Natural killer cell (primary cell): ENCODE measurements at regions of chr3 and their contacts with region 1.

Region 1: DNA sequence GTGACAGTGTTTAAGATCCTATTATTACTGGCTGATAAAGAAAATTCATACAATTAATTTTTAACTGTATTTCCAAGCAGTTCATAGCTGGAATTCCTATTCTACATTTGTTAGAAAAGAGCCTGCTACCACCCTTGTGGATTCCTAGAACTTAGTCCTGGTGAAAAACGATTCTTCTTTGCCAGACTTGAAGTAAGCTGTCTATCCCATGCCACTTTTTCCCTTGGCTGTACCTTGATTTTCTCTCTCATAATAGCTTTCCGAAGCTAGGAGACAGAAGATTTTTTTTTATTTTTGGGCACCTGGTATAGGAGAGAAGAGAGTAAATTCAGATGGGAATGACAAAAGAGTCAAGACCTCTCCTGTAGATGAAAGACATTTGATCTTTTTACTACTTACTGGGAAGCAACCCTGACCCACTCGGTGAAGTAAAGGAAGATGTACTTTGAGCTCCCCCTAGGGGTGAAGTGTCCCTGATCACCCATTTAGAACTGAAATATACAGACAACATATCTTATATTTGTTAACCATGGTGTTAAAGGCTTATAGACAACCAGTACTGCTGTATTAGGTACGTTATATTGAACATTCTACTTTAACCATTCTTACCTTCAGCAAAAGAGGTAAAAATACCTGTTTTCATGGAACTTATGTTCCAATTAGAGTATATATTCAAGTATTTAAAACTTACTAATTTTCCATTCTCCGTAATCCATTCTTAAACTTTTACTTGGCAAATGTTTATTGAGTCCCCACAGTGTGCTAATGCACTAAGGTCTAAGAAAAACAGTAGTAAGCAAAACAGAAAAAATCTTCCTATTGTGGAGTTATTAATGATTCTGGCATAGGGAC is 36.2 kb upstream of the C3orf38 start:
- DNase-seq: peak in 1 of 2 donors; percentile 85
- ATAC-seq: peak; percentile 87 to 95 (median 95)
- H3K4me3 ChIP-seq: no peak overlapping the region
- H3K4me3 Mint-ChIP-seq: no peak overlapping the region
- H3K27ac ChIP-seq: no peak overlapping the region
- H3K27ac Mint-ChIP-seq: peak overlapping the region in 1 of 2 donors; percentile 37
- H3K4me1 ChIP-seq: no peaks in the 10 kb centered on the region
- H3K4me1 Mint-ChIP-seq: peaks cover 7 to 16% of the 10 kb centered on the region in 2 donors
- H3K27me3 ChIP-seq: no peaks in the 10 kb centered on the region
- H3K27me3 Mint-ChIP-seq: no peaks in the 10 kb centered on the region
- CTCF ChIP-seq: peak; percentile 72

Region 2: GRCh38 chr3:87260270-87260669 is 853.3 kb before region 1 on chr3:
- intact Hi-C with region 1: loop called (anchors 5 kb)
- DNase-seq: peak in 1 of 2 donors; percentile 65
- ATAC-seq: peak in 2 of 3 donors; percentile 63 to 66
- H3K4me3 ChIP-seq: no peak overlapping the region
- H3K4me3 Mint-ChIP-seq: no peak overlapping the region
- H3K27ac ChIP-seq: no peak overlapping the region
- H3K27ac Mint-ChIP-seq: no peak overlapping the region
- H3K4me1 ChIP-seq: no peaks in the 10 kb centered on the region
- H3K4me1 Mint-ChIP-seq: peaks cover 0 to 7% of the 10 kb centered on the region in 2 donors
- H3K27me3 ChIP-seq: no peaks in the 10 kb centered on the region
- H3K27me3 Mint-ChIP-seq: no peaks in the 10 kb centered on the region
- CTCF ChIP-seq: peak; percentile 74

Region 3: DNA sequence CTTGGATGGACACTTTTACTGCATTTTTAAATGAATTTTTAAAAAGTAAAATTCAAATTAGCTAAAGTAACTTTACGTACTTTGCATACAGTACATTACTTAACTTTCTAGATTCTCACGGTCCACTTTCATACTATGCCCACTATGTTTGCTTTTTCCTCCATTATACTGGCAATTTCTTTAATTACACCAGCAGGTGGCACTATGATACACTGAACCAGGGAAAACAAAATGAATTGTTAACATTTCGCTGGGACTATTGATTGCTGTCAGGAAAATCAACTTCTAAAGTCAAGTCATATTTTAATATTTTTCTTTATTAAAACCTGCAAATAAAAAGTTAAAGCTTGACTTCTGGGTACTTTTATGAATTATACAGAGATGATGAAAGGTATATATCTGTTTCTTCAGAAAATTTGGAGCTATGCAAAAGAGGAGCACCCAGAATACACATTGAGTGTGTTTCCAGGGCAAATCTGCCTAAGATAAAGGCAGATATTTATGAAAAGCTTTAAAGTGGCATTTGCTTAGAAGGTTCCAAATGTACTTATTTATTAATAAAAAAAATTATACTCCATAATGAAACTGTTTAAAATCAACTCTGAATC is 815.3 kb before region 1 on chr3:
- intact Hi-C with region 1: loop called (anchors 1 kb)
- DNase-seq: peak in 1 of 2 donors; percentile 58
- ATAC-seq: peak; percentile 46 to 67 (median 64)
- H3K4me3 ChIP-seq: no peak overlapping the region
- H3K4me3 Mint-ChIP-seq: no peak overlapping the region
- H3K27ac ChIP-seq: no peak overlapping the region
- H3K27ac Mint-ChIP-seq: no peak overlapping the region
- H3K4me1 ChIP-seq: no peaks in the 10 kb centered on the region
- H3K4me1 Mint-ChIP-seq: no peaks in the 10 kb centered on the region
- H3K27me3 ChIP-seq: no peaks in the 10 kb centered on the region
- H3K27me3 Mint-ChIP-seq: no peaks in the 10 kb centered on the region
- CTCF ChIP-seq: peak; percentile 80

Region 4: GRCh38 chr3:87350364-87351199 is 763.0 kb before region 1 on chr3:
- intact Hi-C with region 1: loop called (anchors 1 kb)
- DNase-seq: peak in 1 of 2 donors; percentile 71
- ATAC-seq: peak; percentile 90 to 95 (median 91)
- H3K4me3 ChIP-seq: no peak overlapping the region
- H3K4me3 Mint-ChIP-seq: no peak overlapping the region
- H3K27ac ChIP-seq: no peak overlapping the region
- H3K27ac Mint-ChIP-seq: no peak overlapping the region
- H3K4me1 ChIP-seq: no peaks in the 10 kb centered on the region
- H3K4me1 Mint-ChIP-seq: no peaks in the 10 kb centered on the region
- H3K27me3 ChIP-seq: no peaks in the 10 kb centered on the region
- H3K27me3 Mint-ChIP-seq: peaks cover 0 to 5% of the 10 kb centered on the region in 2 donors
- CTCF ChIP-seq: peak; percentile 95

Region 5: DNA sequence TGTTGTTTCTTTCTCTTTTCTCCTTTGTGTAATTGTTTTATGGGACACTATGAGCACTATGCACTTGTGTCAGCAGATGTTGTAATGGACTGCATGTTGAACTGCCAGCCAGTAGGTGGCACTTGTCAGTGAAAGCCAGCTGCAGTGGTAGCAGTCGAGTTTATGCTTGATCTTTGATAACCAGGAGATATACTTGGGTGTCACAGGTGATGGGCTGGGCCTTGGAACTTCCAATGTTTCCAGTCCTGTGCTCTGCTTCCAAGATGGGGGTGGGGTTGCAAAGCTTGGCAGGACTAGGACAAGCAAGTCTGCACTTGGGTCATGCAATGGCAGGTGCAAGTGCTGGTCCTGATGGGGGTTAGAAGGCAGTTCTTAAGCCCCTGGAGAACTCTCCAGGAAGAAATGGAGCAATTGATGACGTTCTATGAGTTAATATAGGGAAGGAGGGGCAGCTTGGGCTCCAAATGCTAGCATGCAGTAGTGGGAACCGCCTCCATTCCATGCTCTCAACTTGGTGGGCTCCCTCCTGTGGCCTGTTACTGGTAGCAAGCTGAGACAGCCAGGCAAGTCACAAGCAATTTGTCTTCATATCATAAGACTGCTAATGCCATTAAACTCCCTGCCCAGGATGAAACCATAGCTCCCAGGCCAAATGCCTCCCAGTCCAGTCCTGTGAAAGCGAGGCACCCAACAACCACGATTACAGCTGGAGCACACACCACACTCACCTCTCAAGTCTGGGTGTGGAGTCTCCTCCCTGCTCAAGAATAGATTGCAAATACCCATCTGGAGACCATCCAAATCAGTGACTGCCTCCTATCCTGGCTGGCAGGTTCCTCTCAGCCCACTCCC is 342.0 kb before region 1 on chr3:
- intact Hi-C with region 1: loop called (anchors 1 kb)
- DNase-seq: peak in 1 of 2 donors; percentile 67
- ATAC-seq: peak; percentile 61 to 80 (median 76)
- H3K4me3 ChIP-seq: no peak overlapping the region
- H3K4me3 Mint-ChIP-seq: no peak overlapping the region
- H3K27ac ChIP-seq: no peak overlapping the region
- H3K27ac Mint-ChIP-seq: no peak overlapping the region
- H3K4me1 ChIP-seq: no peaks in the 10 kb centered on the region
- H3K4me1 Mint-ChIP-seq: no peaks in the 10 kb centered on the region
- H3K27me3 ChIP-seq: no peaks in the 10 kb centered on the region
- H3K27me3 Mint-ChIP-seq: peaks cover 0 to 8% of the 10 kb centered on the region in 2 donors
- CTCF ChIP-seq: peak; percentile 55

Region 6: GRCh38 chr3:88003115-88003755 is 110.3 kb before region 1 on chr3:
- intact Hi-C with region 1: loop called (anchors 5 kb)
- DNase-seq: peak in 1 of 2 donors; percentile 56
- ATAC-seq: no peak
- H3K4me3 ChIP-seq: no peak overlapping the region
- H3K4me3 Mint-ChIP-seq: no peak overlapping the region
- H3K27ac ChIP-seq: no peak overlapping the region
- H3K27ac Mint-ChIP-seq: no peak overlapping the region
- H3K4me1 ChIP-seq: no peaks in the 10 kb centered on the region
- H3K4me1 Mint-ChIP-seq: peaks cover 6 to 12% of the 10 kb centered on the region in 2 donors
- H3K27me3 ChIP-seq: no peaks in the 10 kb centered on the region
- H3K27me3 Mint-ChIP-seq: peaks cover 0 to 9% of the 10 kb centered on the region in 2 donors
- CTCF ChIP-seq: peak; percentile 69

Region 7: DNA sequence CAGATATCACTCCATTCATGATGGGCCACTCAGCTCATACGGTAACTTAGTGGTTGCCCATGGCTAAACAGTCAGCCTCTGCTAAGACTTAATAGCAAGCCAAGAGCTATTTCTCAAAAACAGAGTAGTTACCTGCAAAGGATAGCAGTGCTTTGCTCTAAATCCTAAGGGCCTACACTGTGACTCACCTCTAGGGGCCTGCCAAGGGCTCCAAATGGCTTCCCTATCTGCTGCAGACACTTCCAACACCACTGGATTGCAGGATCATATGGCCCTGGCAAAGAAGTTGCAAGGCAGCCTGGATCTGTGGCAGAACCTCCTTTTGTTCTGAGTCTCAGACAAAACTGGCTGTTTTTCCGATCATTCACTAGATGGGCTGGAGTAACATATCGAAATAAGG is 72.5 kb before region 1 on chr3:
- intact Hi-C with region 1: no loop called
- DNase-seq: no peak
- ATAC-seq: no peak
- H3K4me3 ChIP-seq: no peak overlapping the region
- H3K4me3 Mint-ChIP-seq: no peak overlapping the region
- H3K27ac ChIP-seq: no peak overlapping the region
- H3K27ac Mint-ChIP-seq: no peak overlapping the region
- H3K4me1 ChIP-seq: no peaks in the 10 kb centered on the region
- H3K4me1 Mint-ChIP-seq: no peaks in the 10 kb centered on the region
- H3K27me3 ChIP-seq: no peaks in the 10 kb centered on the region
- H3K27me3 Mint-ChIP-seq: no peaks in the 10 kb centered on the region
- CTCF ChIP-seq: no peak